CD4-positive, alpha-beta memory T cell (primary cell): ENCODE measurements at regions of chr2 and their contacts with region 1.

Region 1: DNA sequence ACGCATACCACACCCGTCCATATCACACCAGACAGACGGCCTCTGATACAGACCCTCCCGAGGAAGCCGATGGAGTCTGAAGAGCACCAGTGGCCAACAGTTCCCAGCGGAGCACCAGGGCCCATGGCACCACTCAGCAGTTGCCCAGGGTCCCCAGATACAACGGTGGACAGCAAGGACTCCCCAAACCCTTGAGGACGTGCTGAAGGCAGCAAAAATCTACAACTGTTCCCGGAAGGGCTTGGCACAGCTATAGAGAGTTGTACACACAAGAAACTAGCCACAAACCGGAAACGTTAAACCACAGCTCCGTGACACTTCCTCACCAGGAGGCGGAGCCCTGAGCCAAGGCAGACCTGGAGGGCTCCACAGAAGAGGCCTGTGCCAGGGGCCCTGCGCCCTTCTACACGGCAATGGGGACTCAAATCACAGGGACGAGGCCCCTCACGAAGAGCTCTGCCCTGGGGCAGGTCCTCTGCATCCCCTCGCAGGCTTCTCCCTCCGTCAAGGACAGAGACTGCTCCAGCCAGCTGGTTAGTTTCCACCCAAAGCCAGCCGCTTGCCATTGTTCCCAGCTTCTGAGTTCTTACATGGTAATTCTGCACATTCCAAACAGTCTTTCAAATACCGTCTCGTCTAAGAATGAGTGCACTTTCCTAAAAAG is 133.4 kb downstream of the HDAC4 start:
- DNase-seq: peak; percentile 93 to 96 (median 94)
- H3K4me3 ChIP-seq: peak overlapping the region; percentile 64 to 79
- H3K4me3 Mint-ChIP-seq: peak overlapping the region; percentile 95 to 98 (median 97)
- H3K27ac ChIP-seq: peak overlapping the region; percentile 81
- H3K27ac Mint-ChIP-seq: peak overlapping the region; percentile 95 to 100 (median 98)
- H3K4me1 ChIP-seq: peaks cover 75% of the 10 kb centered on the region
- H3K4me1 Mint-ChIP-seq: peaks cover 46 to 87% (median 68%) of the 10 kb centered on the region in 4 donors
- H3K27me3 ChIP-seq: no peaks in the 10 kb centered on the region
- H3K27me3 Mint-ChIP-seq: no peaks in the 10 kb centered on the region

Region 2: DNA sequence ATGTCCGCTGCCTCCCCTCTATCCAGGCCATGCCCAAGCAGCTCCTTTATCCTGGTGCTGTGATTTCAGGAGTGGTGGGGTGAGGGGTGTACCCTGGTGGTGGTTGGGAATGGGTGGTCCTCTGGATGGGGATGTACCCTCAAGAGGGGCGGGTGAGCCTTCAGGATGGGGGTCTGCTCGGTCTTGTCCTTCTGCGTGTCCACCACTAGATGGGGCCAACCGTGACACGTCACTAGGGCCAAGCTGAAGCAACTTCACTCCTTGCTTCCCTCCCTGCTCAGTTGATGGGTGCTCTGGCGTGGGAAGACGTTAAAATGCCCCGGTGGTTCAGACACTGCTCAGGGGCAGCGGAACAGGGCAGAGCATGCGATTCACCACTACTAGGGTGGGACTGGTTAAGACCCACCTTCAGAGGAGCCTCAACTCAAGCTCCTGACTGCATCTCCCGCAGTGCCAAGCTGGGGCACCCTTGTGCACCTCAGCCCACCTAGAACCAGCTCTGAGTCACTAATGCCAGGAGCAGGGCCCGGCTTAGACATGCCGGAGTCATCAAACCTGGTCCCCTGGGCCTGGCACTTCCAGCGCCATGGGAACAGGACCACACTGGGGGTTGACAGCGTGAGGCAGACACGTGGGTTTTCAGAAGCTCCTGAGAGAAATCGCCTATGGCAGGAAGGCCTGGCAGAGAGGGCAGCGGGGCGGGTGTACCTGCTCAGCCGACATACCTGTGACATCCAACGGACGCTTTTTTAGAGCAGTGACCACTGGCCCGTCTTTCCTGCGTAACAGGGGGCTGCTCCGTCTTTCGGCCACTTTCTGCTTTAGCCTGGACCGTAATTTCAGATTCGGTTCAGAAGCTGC is 123.3 kb before region 1 on chr2:
- CTCF ChIA-PET with region 1: interaction called, 27 read pairs
- POLR2A ChIA-PET with region 1: no interaction called
- intact Hi-C with region 1: loop called (anchors 1 kb)
- DNase-seq: peak in 4 of 5 donors; percentile 15 to 25 (median 18)
- H3K4me3 ChIP-seq: no peak overlapping the region
- H3K4me3 Mint-ChIP-seq: no peak overlapping the region
- H3K27ac ChIP-seq: no peak overlapping the region
- H3K27ac Mint-ChIP-seq: peak overlapping the region in 3 of 7 donors; percentile 22 to 65 (median 56)
- H3K4me1 ChIP-seq: no peaks in the 10 kb centered on the region
- H3K4me1 Mint-ChIP-seq: peaks cover 2 to 14% (median 6%) of the 10 kb centered on the region in 4 donors
- H3K27me3 ChIP-seq: no peaks in the 10 kb centered on the region
- H3K27me3 Mint-ChIP-seq: no peaks in the 10 kb centered on the region

Region 3: DNA sequence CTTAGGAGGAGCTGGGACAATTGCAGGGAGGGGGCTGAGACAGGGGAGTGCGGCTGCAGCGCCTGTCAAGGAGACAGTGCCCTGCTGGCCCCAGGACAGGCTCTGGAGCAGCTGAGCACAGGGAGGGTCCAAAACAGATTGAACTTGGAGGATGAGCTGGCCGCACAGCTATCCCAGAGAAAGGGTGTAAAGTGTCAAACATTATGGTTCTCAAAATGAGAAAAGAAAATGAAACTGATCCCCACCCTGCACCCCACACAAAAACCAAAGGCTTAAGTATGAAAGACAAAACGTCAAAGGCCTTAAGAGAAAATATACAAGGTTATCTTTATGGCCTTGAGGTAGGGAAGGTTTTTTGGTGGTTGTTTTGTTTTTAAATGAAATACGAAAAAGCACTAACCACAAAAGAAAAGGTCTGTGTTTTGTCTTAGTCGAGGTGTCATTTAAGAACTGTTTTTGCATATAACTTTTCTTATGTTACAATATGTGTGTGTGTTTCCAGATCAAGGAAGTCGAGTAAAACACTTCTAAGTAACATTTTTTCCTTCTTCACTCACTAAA is 21.6 kb after region 1 on chr2:
- CTCF ChIA-PET with region 1: interaction called, 196 read pairs
- POLR2A ChIA-PET with region 1: interaction called, 109 read pairs
- intact Hi-C with region 1: no loop called
- DNase-seq: peak; percentile 61 to 76 (median 64)
- H3K4me3 ChIP-seq: peak overlapping the region in 1 of 2 donors; percentile 29
- H3K4me3 Mint-ChIP-seq: peak overlapping the region; percentile 63 to 86 (median 81)
- H3K27ac ChIP-seq: peak overlapping the region; percentile 54
- H3K27ac Mint-ChIP-seq: peak overlapping the region; percentile 86 to 99 (median 95)
- H3K4me1 ChIP-seq: peaks cover 81% of the 10 kb centered on the region
- H3K4me1 Mint-ChIP-seq: peaks cover 53 to 84% (median 68%) of the 10 kb centered on the region in 4 donors
- H3K27me3 ChIP-seq: no peaks in the 10 kb centered on the region
- H3K27me3 Mint-ChIP-seq: no peaks in the 10 kb centered on the region

Region 4: GRCh38 chr2:239369631-239370161 is 102.3 kb after region 1 on chr2:
- CTCF ChIA-PET with region 1: interaction called, 13 read pairs
- POLR2A ChIA-PET with region 1: interaction called, 15 read pairs
- intact Hi-C with region 1: no loop called
- DNase-seq: peak; percentile 80 to 95 (median 90)
- H3K4me3 ChIP-seq: peak overlapping the region in 1 of 2 donors; percentile 48
- H3K4me3 Mint-ChIP-seq: peak overlapping the region; percentile 77 to 92 (median 84)
- H3K27ac ChIP-seq: peak overlapping the region; percentile 82
- H3K27ac Mint-ChIP-seq: peak overlapping the region in 1 of 7 donors; percentile 99
- H3K4me1 ChIP-seq: peaks cover 39% of the 10 kb centered on the region
- H3K4me1 Mint-ChIP-seq: peaks cover 7 to 15% (median 11%) of the 10 kb centered on the region in 4 donors
- H3K27me3 ChIP-seq: no peaks in the 10 kb centered on the region
- H3K27me3 Mint-ChIP-seq: no peaks in the 10 kb centered on the region

Region 5: GRCh38 chr2:239401067-239401880 is 133.9 kb after region 1 on chr2:
- CTCF ChIA-PET with region 1: interaction called, 34 read pairs
- POLR2A ChIA-PET with region 1: interaction called, 35 read pairs
- intact Hi-C with region 1: loop called (anchors 1 kb)
- DNase-seq: peak; percentile 99 to 100 (median 100)
- H3K4me3 ChIP-seq: peak overlapping the region; percentile 87 to 89
- H3K4me3 Mint-ChIP-seq: peak overlapping the region; percentile 83 to 96 (median 92)
- H3K27ac ChIP-seq: peak overlapping the region; percentile 100
- H3K27ac Mint-ChIP-seq: peak overlapping the region; percentile 92 to 100 (median 98)
- H3K4me1 ChIP-seq: peaks cover 30% of the 10 kb centered on the region
- H3K4me1 Mint-ChIP-seq: peaks cover 15 to 54% (median 34%) of the 10 kb centered on the region in 4 donors
- H3K27me3 ChIP-seq: no peaks in the 10 kb centered on the region
- H3K27me3 Mint-ChIP-seq: no peaks in the 10 kb centered on the region

Region 6: GRCh38 chr2:239991689-239992314 is 724.4 kb after region 1 on chr2:
- CTCF ChIA-PET with region 1: interaction called, 5 read pairs
- POLR2A ChIA-PET with region 1: no interaction called
- intact Hi-C with region 1: loop called (anchors 10 kb)
- DNase-seq: peak in 4 of 5 donors; percentile 42 to 52 (median 46)
- H3K4me3 ChIP-seq: no peak overlapping the region
- H3K4me3 Mint-ChIP-seq: no peak overlapping the region
- H3K27ac ChIP-seq: no peak overlapping the region
- H3K27ac Mint-ChIP-seq: no peak overlapping the region
- H3K4me1 ChIP-seq: no peaks in the 10 kb centered on the region
- H3K4me1 Mint-ChIP-seq: peaks cover 0 to 6% (median 0%) of the 10 kb centered on the region in 4 donors
- H3K27me3 ChIP-seq: no peaks in the 10 kb centered on the region
- H3K27me3 Mint-ChIP-seq: no peaks in the 10 kb centered on the region